ENCODE measurements at regions of chr15 and their contacts with region 1.

Region 1: DNA sequence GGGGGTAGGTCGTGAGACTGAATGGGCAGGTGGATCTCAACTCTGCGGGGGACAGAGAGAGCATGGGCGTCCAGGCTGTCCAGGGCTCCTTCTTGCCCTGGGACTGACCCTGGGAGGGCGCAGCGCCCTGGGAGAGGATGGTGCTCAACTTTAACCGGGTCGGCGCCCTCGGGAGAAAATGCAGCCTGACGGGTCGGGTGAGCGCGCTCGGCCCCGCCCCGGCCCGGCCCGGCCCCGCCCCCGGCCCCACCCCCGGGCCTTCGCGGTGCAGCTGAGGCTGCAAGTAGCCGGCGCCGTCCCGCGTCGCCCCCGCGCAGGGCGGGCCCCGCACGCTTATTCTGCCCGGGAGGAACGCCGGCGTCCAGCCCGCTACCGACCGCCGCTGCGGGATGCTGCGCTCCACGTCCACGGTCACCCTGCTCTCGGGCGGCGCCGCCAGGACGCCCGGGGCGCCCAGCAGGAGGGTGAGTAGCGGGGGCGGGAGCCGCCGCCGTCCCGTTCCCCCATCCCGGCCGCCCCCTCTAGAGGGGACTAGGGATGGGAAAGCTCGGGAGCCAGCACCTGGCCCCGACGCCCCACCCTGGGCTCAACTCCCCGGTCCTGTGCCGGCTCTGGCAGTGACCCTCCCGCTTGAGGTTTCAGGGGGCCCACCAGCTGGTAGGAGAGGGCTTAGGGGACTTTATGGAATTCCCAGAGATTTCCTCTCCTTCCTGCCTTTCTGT is at the start of gene MYZAP:
- DNase-seq: peak; percentile 59
- ATAC-seq: peak; percentile 83
- H3K4me3 Mint-ChIP-seq: peak within 1 kb of the TSS; percentile 81
- H3K27ac Mint-ChIP-seq: peak within 1 kb of the TSS; percentile 48
- H3K4me1 Mint-ChIP-seq: peaks cover 51% of the 10 kb centered on the region
- H3K27me3 Mint-ChIP-seq: peaks cover 3% of the 10 kb centered on the region
- CTCF ChIP-seq: no peak
- total RNA-seq, gene MYZAP: 0.88 and 1.00 TPM in 2 replicates

Region 2: DNA sequence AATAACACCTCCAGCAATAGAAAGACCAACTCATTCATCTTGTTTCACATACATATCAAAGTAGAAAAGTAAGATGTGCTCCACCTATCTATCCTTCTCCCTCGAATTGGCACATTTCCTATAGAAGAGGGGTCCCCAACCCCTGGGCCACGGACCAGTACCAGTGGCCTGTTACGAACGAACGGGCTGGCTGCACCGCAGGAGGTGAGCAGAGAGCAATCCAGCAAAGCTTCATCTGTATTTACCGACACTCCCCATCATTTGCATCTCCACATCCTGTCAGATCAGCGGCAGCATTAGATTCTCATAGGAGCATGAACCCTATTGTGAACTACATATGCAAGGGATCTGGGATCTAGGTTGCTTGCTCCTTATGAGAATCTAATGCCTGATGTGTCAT is 310.5 kb before region 1 on chr15:
- CTCF ChIA-PET with region 1: no interaction called
- POLR2A ChIA-PET with region 1: no interaction called
- intact Hi-C with region 1: no loop called
- DNase-seq: no peak
- ATAC-seq: peak; percentile 65
- H3K4me3 Mint-ChIP-seq: peak overlapping the region; percentile 83
- H3K27ac Mint-ChIP-seq: peak overlapping the region; percentile 98
- H3K4me1 Mint-ChIP-seq: peaks cover 79% of the 10 kb centered on the region
- H3K27me3 Mint-ChIP-seq: no peaks in the 10 kb centered on the region
- CTCF ChIP-seq: no peak

Region 3: GRCh38 chr15:57485869-57486268 is 105.9 kb before region 1 on chr15:
- CTCF ChIA-PET with region 1: no interaction called
- POLR2A ChIA-PET with region 1: no interaction called
- intact Hi-C with region 1: no loop called
- DNase-seq: no peak
- ATAC-seq: no peak
- H3K4me3 Mint-ChIP-seq: no peak overlapping the region
- H3K27ac Mint-ChIP-seq: no peak overlapping the region
- H3K4me1 Mint-ChIP-seq: no peaks in the 10 kb centered on the region
- H3K27me3 Mint-ChIP-seq: peaks cover 15% of the 10 kb centered on the region
- CTCF ChIP-seq: no peak

Region 4: GRCh38 chr15:57706405-57707209 is 114.8 kb after region 1 on chr15 and contains the start of gene POLR2M:
- CTCF ChIA-PET with region 1: interaction called, 3 read pairs
- POLR2A ChIA-PET with region 1: interaction called, 5 read pairs
- intact Hi-C with region 1: loop called (anchors 1 kb)
- DNase-seq: peak; percentile 71
- ATAC-seq: peak; percentile 92
- H3K4me3 Mint-ChIP-seq: peak within 1 kb of the TSS; percentile 87
- H3K27ac Mint-ChIP-seq: peak within 1 kb of the TSS; percentile 88
- H3K4me1 Mint-ChIP-seq: peaks cover 36% of the 10 kb centered on the region
- H3K27me3 Mint-ChIP-seq: peaks cover 6% of the 10 kb centered on the region
- CTCF ChIP-seq: no peak
- total RNA-seq, gene POLR2M: 53.8 and 65.2 TPM in 2 replicates